ENCODE measurements at regions of chr5 and their contacts with region 1.

Region 1: GRCh38 chr5:173293817-173294672 is 34.2 kb downstream of the STC2 start:
- DNase-seq: peak; percentile 94
- H3K4me3 Mint-ChIP-seq: peak overlapping the region; percentile 9
- H3K27ac Mint-ChIP-seq: peak overlapping the region; percentile 24
- H3K4me1 Mint-ChIP-seq: peaks cover 21% of the 10 kb centered on the region
- H3K27me3 Mint-ChIP-seq: no peaks in the 10 kb centered on the region
- CTCF ChIP-seq: peak; percentile 93

Region 2: GRCh38 chr5:173016621-173017047 is 277.4 kb before region 1 on chr5:
- CTCF ChIA-PET with region 1: no interaction called
- POLR2A ChIA-PET with region 1: no interaction called
- intact Hi-C with region 1: no loop called
- DNase-seq: peak; percentile 70
- H3K4me3 Mint-ChIP-seq: peak overlapping the region; percentile 35
- H3K27ac Mint-ChIP-seq: peak overlapping the region; percentile 89
- H3K4me1 Mint-ChIP-seq: peaks cover 52% of the 10 kb centered on the region
- H3K27me3 Mint-ChIP-seq: no peaks in the 10 kb centered on the region
- CTCF ChIP-seq: no peak

Region 3: GRCh38 chr5:173075139-173075982 is 218.7 kb before region 1 on chr5:
- CTCF ChIA-PET with region 1: no interaction called
- POLR2A ChIA-PET with region 1: no interaction called
- intact Hi-C with region 1: no loop called
- DNase-seq: no peak
- H3K4me3 Mint-ChIP-seq: no peak overlapping the region
- H3K27ac Mint-ChIP-seq: no peak overlapping the region
- H3K4me1 Mint-ChIP-seq: peaks cover 28% of the 10 kb centered on the region
- H3K27me3 Mint-ChIP-seq: no peaks in the 10 kb centered on the region
- CTCF ChIP-seq: no peak

Region 4: DNA sequence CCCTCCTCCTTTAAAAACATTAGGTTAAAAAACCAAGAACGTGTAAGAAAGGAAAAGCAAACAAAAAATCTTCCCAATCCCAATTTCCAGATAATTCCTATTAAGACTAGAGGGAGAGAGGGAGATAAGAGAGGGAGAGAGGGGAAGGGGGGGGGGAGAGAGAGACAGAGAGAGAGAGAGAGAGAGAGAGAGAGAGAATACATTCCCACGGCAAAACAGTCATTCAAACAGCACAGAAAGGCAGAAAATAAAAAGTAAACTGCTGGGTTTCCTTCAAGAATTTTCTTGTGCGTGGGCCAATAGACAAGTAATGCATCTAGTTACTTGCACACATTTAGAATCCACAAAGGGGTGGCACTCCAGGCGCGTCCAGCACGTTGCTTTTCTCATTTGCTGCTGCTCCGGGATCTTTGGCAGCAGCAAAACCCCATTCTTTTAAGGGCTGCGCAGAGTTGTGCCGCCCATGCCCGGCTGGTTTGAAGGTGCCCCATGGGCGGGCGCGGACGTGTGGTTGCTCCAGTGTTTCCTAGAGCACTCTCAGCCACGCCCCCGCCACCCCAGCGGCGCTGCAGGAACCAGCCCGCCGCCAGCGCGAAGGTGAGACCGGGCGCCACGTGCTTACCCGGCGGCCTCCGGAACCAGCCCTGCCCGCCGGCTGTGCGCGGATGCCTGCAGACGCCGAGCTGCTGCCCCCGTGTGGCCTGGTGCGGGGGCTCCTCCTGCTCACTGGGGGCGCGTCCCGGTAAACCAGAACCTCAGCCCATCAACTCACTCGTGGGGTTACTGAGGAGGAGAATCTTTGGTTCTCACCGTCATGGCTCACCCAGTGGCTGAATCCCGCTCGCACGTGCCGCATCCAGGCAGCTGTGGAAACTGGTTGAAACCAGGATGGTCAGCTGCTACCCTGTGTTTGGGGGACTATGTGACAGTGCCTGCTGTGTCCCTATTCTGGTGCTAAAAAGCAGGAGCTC is 10.4 kb before region 1 on chr5:
- CTCF ChIA-PET with region 1: interaction called, 11 read pairs
- POLR2A ChIA-PET with region 1: interaction called, 4 read pairs
- intact Hi-C with region 1: no loop called
- DNase-seq: peak; percentile 79
- H3K4me3 Mint-ChIP-seq: peak overlapping the region; percentile 49
- H3K27ac Mint-ChIP-seq: no peak overlapping the region
- H3K4me1 Mint-ChIP-seq: peaks cover 6% of the 10 kb centered on the region
- H3K27me3 Mint-ChIP-seq: no peaks in the 10 kb centered on the region
- CTCF ChIP-seq: peak; percentile 96

Region 5: GRCh38 chr5:173495225-173495904 is 201.3 kb after region 1 on chr5:
- CTCF ChIA-PET with region 1: interaction called, 3 read pairs
- POLR2A ChIA-PET with region 1: no interaction called
- intact Hi-C with region 1: loop called (anchors 1 kb)
- DNase-seq: no peak
- H3K4me3 Mint-ChIP-seq: no peak overlapping the region
- H3K27ac Mint-ChIP-seq: no peak overlapping the region
- H3K4me1 Mint-ChIP-seq: peaks cover 9% of the 10 kb centered on the region
- H3K27me3 Mint-ChIP-seq: no peaks in the 10 kb centered on the region
- CTCF ChIP-seq: no peak

Region 6: DNA sequence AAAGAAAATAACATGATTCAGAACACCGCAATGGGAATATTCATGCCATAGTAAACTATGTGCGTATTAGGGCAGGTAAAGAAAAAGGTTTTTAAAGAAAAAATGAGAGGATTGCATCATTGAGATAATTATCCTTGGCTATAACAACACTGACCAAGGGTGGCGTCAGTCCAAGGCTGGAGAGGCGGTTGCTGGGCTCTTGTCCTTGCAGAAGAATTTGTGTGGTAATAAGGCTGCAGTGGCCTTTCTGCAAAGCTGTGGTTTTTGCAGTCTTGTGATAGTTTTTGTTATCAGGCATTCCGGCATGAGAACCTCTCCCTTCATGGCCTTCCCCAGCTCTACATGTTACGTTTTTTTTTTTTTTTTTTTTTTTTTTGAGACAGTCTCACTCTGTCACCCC is 308.4 kb after region 1 on chr5:
- CTCF ChIA-PET with region 1: interaction called, 12 read pairs
- POLR2A ChIA-PET with region 1: interaction called, 3 read pairs
- intact Hi-C with region 1: no loop called
- DNase-seq: peak; percentile 55
- H3K4me3 Mint-ChIP-seq: no peak overlapping the region
- H3K27ac Mint-ChIP-seq: no peak overlapping the region
- H3K4me1 Mint-ChIP-seq: peaks cover 5% of the 10 kb centered on the region
- H3K27me3 Mint-ChIP-seq: no peaks in the 10 kb centered on the region
- CTCF ChIP-seq: no peak

Measured in MCF 10A (cell line).